Left cardiac atrium (tissue), 4 donors: ENCODE measurements at regions of chr2 and their contacts with region 1.

Region 1: DNA sequence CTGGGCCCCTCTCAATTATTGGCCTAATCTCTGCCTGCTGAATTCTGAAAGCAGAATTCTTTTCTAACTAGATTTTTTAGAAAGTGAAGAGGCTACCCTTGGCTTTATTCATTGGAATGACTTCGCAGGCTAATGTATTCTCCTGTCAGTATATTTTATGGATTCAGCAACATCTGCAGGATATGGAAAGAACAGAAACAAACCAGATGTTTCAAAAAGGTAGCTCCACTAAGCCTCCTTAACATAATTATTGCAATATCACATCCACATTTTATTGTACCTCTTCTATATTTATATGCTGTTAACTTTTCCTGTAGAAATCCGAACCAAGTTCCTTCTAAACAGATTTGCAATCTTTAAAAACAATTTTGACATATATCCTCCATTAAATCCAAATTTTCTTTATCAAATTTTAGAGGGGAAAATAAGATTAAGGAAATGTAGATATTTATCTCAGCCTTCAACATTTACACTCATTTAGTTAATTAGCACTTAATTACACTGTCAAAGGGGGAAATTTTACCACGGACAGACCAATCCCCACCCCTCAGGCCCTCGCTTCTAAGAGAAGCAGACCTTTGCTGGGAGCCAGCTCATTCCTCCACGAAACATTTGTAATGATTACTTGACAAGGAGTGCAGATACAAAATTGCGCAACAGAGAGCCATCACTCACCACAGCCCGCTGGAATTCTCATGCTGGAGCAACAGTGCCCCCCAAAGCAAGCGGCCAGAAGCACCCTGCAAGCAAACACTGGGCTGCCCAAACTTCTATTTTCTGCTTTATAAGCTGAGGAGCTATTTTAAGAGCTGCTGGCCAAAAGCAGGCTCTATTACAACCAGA is 253.4 kb downstream of the ETAA1 start:
- DNase-seq: peak; percentile 79
- ATAC-seq: peak; percentile 93 to 96

Region 2: DNA sequence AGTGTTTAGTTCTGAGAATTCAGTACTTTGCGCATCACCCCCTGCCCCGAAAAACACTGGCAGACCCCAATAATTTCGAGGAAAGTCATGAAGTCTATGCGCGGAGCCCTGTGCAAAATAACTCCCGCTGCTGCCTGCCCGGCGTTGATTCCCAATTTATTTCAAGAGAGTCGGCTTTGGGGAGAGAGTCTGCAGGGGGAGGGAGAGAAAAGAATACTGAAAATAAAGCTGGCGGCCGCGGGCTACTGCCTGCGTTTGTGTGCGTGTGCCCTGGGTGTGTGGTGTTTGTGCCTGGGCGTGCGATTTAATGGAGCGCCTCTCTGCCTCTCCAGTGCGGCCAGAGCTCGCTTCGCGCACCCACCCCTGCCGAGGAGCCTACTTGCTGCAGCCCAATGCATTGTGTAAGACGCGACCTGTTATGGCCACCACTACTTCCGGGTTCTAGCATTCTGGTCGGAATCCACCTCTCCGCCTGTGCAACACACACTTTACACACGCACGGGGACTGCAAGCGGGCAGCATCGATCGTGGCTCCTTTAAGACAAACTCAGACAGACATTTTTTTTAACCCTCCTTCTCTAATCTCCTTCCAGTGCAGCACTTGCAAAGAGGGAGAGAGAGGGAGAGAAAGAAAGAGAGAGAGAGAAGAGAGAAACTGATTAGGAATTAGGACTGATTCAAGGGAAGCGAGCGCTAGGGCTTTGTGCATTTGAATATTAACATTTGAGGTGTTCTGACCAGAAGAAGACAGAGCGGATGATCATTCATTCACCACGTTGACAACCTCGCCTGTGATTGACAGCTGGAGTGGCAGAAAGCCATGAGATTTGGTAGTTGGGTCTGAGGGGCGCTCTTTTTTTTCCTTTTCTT is 1215.6 kb before region 1 on chr2 and contains the start of gene MEIS1:
- intact Hi-C with region 1: loop called in 1 of 2 experiments (anchors 5 kb)
- DNase-seq: peak; percentile 92
- ATAC-seq: peak; percentile 87 to 89
- total RNA-seq, gene MEIS1: 32.4 to 36.1 TPM

Region 3: GRCh38 chr2:67346718-67347407 is 303.6 kb before region 1 on chr2:
- intact Hi-C with region 1: loop called in 1 of 2 experiments (anchors 10 kb)
- DNase-seq: no peak
- ATAC-seq: no peak

Region 4: GRCh38 chr2:67486041-67486796 is 164.3 kb before region 1 on chr2:
- intact Hi-C with region 1: loop called in 1 of 2 experiments (anchors 10 kb)
- DNase-seq: peak; percentile 31
- ATAC-seq: peak; percentile 87 to 92

Region 5: DNA sequence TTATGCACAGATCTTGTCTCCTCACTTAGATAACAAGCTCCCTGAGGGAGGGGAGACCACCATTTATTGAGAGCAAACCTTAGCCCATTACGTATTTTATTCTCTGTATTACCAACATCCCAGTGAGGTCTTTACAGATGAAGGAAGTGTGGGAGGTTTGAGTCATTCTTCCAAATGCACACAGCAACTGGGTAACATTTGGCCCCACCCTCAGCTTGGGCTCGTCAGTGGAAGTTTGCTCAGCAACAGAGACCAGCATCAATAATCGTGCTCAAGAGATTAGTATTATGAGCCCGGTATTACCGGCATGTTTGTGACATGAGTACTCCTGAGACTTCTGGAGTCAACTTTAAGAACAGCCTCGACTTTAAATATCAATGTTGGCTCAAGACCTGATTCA is 84.8 kb before region 1 on chr2:
- intact Hi-C with region 1: loop called in 1 of 2 experiments (anchors 2 kb)
- DNase-seq: peak; percentile 44
- ATAC-seq: peak in 1 of 2 donors; percentile 34

Region 6: GRCh38 chr2:67840460-67841068 is 190.1 kb after region 1 on chr2:
- intact Hi-C with region 1: loop called in 1 of 2 experiments (anchors 5 kb)
- DNase-seq: peak; percentile 66
- ATAC-seq: peak; percentile 96